PC-9 (cell line): ENCODE measurements at regions of chr1 and their contacts with region 1.

Region 1: GRCh38 chr1:185044981-185045813 is at the start of gene RNF2:
- DNase-seq: peak; percentile 57 to 72
- H3K4me3 ChIP-seq: peak within 1 kb of the TSS; percentile 71
- H3K27ac ChIP-seq: peak within 1 kb of the TSS; percentile 63
- H3K4me1 ChIP-seq: peaks cover 18% of the 10 kb centered on the region
- H3K27me3 ChIP-seq: no peaks in the 10 kb centered on the region
- CTCF ChIP-seq: no peak
- total RNA-seq, gene RNF2: 18.3 and 26.2 TPM in 2 replicates

Region 2: DNA sequence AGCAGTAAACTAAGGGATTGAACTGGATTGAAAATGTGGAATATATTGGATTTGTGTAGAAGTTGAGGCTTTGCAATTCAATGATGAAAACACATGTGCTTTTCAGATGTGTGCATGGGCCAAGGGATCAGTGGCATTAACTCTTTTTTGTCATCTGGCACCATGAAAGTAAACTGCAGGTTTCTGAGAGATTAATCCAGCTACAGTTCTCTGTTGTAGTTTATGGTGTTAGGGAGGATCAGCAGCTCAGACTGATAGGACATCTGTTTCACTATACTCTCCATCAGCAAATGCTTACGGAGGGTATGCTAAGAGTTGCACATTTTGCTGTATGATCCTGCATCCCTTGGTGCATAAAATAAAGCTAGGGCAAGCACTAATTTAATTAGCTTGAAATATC is 575.8 kb before region 1 on chr1:
- CTCF ChIA-PET with region 1: no interaction called
- POLR2A ChIA-PET with region 1: interaction called, 20 read pairs
- intact Hi-C with region 1: no loop called
- DNase-seq: no peak
- H3K4me3 ChIP-seq: no peak overlapping the region
- H3K27ac ChIP-seq: no peak overlapping the region
- H3K4me1 ChIP-seq: no peaks in the 10 kb centered on the region
- H3K27me3 ChIP-seq: no peaks in the 10 kb centered on the region
- CTCF ChIP-seq: no peak

Region 3: DNA sequence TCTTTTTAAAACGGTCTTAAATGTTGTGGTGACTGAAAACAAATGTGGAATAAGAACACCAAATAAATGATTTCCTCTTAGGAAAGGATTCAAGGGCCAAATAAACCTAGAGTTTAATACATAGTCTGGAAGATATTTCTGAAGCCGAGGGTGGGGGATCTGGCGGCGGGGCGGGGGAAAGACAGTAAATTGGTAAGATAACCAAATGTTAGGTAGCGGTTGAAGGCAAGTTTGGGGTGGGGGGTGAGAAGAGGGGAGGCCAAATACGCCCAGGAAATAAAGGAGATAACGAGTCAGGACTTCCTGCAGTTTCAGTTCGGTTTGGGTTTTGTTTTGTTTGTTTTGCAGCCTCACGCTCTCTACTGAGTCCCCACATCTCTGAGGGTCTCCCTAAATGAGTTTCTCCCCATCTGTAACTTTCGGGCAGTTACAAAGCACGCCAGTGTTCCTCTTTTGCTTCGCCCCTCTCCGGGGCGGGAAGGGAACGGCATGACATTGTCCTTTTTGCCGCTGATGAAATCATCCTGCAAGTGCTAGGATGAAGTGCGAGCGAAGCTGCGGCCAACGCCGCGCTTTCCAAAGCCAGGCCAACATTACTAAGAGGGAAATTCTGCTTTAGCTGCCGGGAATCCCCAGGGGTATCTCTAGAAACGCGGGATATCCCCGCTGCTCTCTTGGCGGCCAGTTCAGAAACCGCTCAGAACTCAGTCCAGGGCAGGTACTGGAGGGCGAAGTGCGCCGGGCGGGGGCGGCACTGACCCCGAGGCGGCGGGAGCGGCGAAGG is 71.7 kb before region 1 on chr1:
- CTCF ChIA-PET with region 1: interaction called, 15 read pairs
- POLR2A ChIA-PET with region 1: no interaction called
- intact Hi-C with region 1: no loop called
- DNase-seq: peak in 1 of 2 experiments; percentile 38
- H3K4me3 ChIP-seq: peak overlapping the region; percentile 92
- H3K27ac ChIP-seq: peak overlapping the region; percentile 52
- H3K4me1 ChIP-seq: peaks cover 20% of the 10 kb centered on the region
- H3K27me3 ChIP-seq: no peaks in the 10 kb centered on the region
- CTCF ChIP-seq: no peak

Region 4: GRCh38 chr1:185096531-185096930 is 51.3 kb after region 1 on chr1:
- CTCF ChIA-PET with region 1: interaction called, 12 read pairs
- POLR2A ChIA-PET with region 1: no interaction called
- intact Hi-C with region 1: no loop called
- DNase-seq: no peak
- H3K4me3 ChIP-seq: no peak overlapping the region
- H3K27ac ChIP-seq: no peak overlapping the region
- H3K4me1 ChIP-seq: no peaks in the 10 kb centered on the region
- H3K27me3 ChIP-seq: no peaks in the 10 kb centered on the region
- CTCF ChIP-seq: no peak

Region 5: GRCh38 chr1:185156854-185157598 is 111.8 kb after region 1 on chr1 and contains the starts of genes SWT1 and TRMT1L:
- CTCF ChIA-PET with region 1: no interaction called
- POLR2A ChIA-PET with region 1: interaction called, 12 read pairs
- intact Hi-C with region 1: loop called (anchors 2 kb)
- DNase-seq: peak; percentile 95 to 98
- H3K4me3 ChIP-seq: peak within 1 kb of the TSS; percentile 82
- H3K27ac ChIP-seq: peak within 1 kb of the TSS; percentile 55
- H3K4me1 ChIP-seq: peaks cover 21% of the 10 kb centered on the region
- H3K27me3 ChIP-seq: no peaks in the 10 kb centered on the region
- CTCF ChIP-seq: no peak
- total RNA-seq, gene SWT1: 2.9 and 3.6 TPM in 2 replicates
- total RNA-seq, gene TRMT1L: 16.9 and 18.3 TPM in 2 replicates

Region 6: DNA sequence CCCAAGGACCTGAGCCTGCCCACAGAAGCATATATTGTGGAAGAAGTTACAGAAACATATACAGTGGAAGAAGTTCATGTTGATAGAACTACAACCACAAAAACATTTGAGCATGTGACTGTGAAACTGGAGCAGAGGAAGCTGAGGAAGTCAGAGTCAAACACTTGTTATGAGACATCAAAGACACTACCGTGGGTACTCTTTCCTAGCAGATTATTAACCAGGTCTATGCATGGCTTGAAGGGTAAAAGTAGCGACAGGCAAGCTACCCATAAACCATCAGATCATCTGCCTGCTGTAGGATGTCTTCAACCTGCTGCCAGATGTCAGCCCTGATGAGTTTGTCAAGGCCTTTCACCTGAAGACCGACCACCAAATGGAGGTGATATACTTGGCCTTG is 236.0 kb after region 1 on chr1:
- CTCF ChIA-PET with region 1: no interaction called
- POLR2A ChIA-PET with region 1: no interaction called
- intact Hi-C with region 1: no loop called
- DNase-seq: no peak
- H3K4me3 ChIP-seq: no peak overlapping the region
- H3K27ac ChIP-seq: no peak overlapping the region
- H3K4me1 ChIP-seq: no peaks in the 10 kb centered on the region
- H3K27me3 ChIP-seq: no peaks in the 10 kb centered on the region
- CTCF ChIP-seq: no peak

Region 7: GRCh38 chr1:185291652-185292051 is 246.5 kb after region 1 on chr1:
- CTCF ChIA-PET with region 1: no interaction called
- POLR2A ChIA-PET with region 1: no interaction called
- intact Hi-C with region 1: no loop called
- DNase-seq: no peak
- H3K4me3 ChIP-seq: no peak overlapping the region
- H3K27ac ChIP-seq: no peak overlapping the region
- H3K4me1 ChIP-seq: no peaks in the 10 kb centered on the region
- H3K27me3 ChIP-seq: no peaks in the 10 kb centered on the region
- CTCF ChIP-seq: no peak